ENCODE measurements at regions of chr3 and their contacts with region 1.

Region 1: DNA sequence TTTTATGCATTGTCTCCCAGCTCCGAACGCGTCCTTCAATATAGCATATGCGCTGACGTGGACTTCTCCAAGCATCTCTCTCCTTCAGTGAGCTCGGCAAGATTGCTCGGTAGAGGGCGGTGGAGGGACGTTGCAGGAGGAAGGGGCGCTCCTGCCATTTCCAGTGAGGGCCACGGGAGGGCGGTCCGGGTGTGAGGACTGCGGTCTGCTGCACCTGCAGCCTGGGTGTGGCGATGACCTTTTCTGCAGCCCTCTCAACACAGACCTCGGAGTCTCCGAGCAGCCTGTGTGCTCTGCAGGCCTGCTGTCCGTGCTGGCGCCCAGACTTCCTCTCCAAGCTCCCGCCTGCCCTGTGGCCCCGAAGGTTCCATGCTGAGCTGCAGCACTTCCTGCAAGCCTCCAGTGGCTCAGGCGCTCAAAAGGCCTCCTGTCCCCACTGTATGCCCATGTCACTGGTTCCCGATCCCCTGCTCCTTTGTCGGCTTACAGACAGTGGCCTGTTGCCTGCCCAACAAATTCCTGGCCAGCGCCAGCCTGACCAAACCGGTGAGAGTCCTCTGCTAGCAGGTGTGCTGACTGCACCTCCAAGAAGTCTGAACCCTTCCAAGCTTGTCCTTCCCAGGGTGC is 8.9 kb upstream of the RTP3 start:
- DNase-seq: no peak
- H3K4me3 ChIP-seq: no peak overlapping the region
- H3K27me3 ChIP-seq: no peaks in the 10 kb centered on the region; the same call in 1 of the 2 replicates
- CTCF ChIP-seq: peak; percentile 100

Region 2: DNA sequence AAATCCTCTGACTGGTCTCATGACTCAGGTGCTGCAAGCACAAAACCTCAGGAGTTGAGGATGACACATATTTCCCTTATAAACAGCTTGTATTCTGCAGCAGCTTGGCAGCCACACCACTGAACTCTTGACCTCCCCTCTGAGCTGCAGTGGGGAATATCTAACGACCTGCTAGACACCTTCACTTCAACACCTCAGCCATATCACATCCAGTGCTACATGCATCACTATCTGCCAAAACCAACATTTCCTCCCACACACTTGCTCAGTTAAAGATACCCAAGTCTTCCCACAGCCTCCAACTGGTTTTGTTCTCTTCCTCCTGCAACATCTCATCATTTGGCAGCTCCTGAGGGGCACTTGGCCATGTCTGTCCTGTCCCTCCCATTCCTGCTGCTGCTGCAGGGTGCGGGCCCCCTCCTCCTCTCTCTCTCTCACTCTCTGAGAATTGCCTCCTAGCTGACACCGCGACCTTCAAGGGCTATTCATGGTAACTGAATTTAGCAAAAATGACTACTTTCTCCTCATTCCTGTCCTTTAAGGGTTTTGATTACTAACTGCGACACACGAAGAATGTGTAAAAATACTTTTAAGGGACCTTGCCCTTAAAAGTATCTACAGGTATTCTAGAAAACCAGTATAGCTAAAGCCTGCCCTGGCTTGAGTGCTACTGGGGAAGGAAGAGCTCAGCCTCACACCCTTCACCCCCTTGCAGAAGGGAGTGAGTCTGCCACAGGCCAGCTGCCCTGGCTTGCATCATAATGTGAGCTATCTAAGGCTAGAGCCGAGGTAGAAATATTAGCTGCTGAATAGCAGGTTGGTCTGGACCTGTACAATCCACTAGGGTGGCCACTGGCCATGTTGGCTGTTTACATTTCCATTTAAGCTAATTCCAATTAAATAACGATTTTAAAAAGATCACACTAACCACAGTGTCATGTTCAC is 607.5 kb before region 1 on chr3:
- CTCF ChIA-PET with region 1: no interaction called
- POLR2A ChIA-PET with region 1: no interaction called
- DNase-seq: no peak
- H3K4me3 ChIP-seq: no peak overlapping the region
- H3K27me3 ChIP-seq: peaks cover 19% of the 10 kb centered on the region
- CTCF ChIP-seq: no peak

Region 3: GRCh38 chr3:46416125-46416810 is 72.6 kb before region 1 on chr3:
- CTCF ChIA-PET with region 1: no interaction called
- POLR2A ChIA-PET with region 1: no interaction called
- DNase-seq: no peak
- H3K4me3 ChIP-seq: no peak overlapping the region
- H3K27me3 ChIP-seq: no peaks in the 10 kb centered on the region; the same call in none of the 2 replicates
- CTCF ChIP-seq: no peak

Region 4: DNA sequence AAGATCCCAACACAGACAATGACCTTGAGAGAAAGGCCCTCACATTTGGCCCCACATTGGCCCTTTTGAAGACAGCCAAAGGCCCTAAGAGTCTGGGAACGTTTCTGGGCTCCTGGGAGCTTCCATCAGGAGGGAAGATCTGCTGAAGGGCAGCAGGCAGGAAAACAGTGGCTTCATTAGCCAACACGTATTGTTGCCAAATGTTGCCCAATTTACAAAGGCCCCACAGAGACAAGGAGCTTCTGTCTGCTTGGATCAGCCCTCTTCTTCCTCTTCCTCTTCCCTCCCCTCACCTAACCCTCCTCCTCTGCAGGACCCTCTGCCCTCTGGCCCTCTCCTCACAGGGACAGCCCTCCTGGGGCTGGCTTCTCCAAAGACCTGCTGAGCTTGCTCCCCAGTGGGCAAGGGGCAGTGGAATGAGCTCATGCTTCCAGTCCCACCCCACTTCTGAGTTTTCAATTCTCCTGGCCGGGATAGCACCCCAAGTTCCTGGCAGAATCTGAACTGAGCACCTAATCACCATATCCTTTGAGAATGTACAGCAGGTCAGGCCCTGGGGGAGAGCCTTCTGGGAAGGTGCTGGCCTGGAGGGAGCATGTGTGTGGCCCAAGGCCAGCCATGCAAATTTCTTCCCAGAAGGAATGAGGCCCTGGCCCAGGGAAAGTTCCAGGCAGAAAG is 19.0 kb before region 1 on chr3:
- CTCF ChIA-PET with region 1: interaction called, 36 read pairs
- POLR2A ChIA-PET with region 1: no interaction called
- DNase-seq: no peak
- H3K4me3 ChIP-seq: no peak overlapping the region
- H3K27me3 ChIP-seq: peaks cover 28% of the 10 kb centered on the region
- CTCF ChIP-seq: no peak

Region 5: DNA sequence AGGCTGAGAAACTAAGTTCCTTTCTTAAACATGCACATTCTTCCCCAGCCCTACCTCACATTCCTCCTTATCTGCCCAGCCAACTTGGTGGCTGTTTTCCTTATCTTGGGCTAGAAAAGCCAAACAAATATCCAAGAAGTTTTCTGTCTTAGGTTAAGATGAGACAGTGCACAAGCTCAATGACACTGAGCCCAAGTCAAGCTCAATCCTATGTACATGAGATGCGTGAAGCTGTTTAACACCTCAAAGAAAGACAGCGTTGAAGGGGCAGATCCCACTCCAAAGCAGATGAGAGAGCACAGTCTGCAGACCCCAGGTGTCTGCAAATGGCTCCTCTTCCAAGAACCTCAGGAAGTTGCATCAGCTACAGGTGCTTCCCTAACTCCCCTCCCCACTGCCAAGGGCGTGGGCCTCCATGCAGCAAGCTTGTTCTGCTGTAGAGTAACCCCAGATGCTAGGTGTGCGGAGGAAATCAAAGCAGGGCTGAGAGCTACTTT is 60.6 kb after region 1 on chr3:
- CTCF ChIA-PET with region 1: interaction called, 21 read pairs
- POLR2A ChIA-PET with region 1: no interaction called
- DNase-seq: no peak
- H3K4me3 ChIP-seq: no peak overlapping the region
- H3K27me3 ChIP-seq: no peaks in the 10 kb centered on the region
- CTCF ChIP-seq: no peak

Region 6: GRCh38 chr3:46566036-46566641 is 77.3 kb after region 1 on chr3 and contains the start of gene LRRC2:
- CTCF ChIA-PET with region 1: interaction called, 182 read pairs
- POLR2A ChIA-PET with region 1: no interaction called
- DNase-seq: peak; percentile 15
- H3K4me3 ChIP-seq: peak within 1 kb of the TSS; percentile 47
- H3K27me3 ChIP-seq: no peaks in the 10 kb centered on the region
- CTCF ChIP-seq: no peak
- polyA plus RNA-seq, gene LRRC2: 0.55 and 1.2 TPM in 2 replicates

Region 7: GRCh38 chr3:46629551-46630517 is 141.0 kb after region 1 on chr3:
- CTCF ChIA-PET with region 1: interaction called, 146 read pairs
- POLR2A ChIA-PET with region 1: no interaction called
- DNase-seq: peak; percentile 13
- H3K4me3 ChIP-seq: 0 out of 2 replicates have a peak overlapping the region, but pooled peaks have one; percentile 2
- H3K27me3 ChIP-seq: peaks cover 3% of the 10 kb centered on the region; the same call in 1 of the 2 replicates
- CTCF ChIP-seq: peak; percentile 98